Heart left ventricle (tissue), 16 donors: ENCODE measurements at regions of chr6 and their contacts with region 1.

Region 1: GRCh38 chr6:143187238-143187923 is 126.7 kb downstream of the AIG1 start:
- DNase-seq: peak in 4 of 5 donors; percentile 28 to 62 (median 40)
- ATAC-seq: peak in 3 of 4 donors; percentile 69 to 79 (median 78)
- H3K4me3 ChIP-seq: no peak overlapping the region
- H3K27ac ChIP-seq: peak overlapping the region in 9 of 12 donors; percentile 19 to 72 (median 44)
- H3K4me1 ChIP-seq: peaks cover 0 to 26% (median 14%) of the 10 kb centered on the region in 12 donors
- H3K27me3 ChIP-seq: no peaks in the 10 kb centered on the region
- CTCF ChIP-seq: no peak
- POLR2A ChIP-seq: no peak

Region 2: GRCh38 chr6:143223895-143224294 is 36.5 kb after region 1 on chr6:
- intact Hi-C with region 1: loop called in 1 of 10 experiments (anchors 5 kb)
- DNase-seq: peak in 4 of 5 donors; percentile 65 to 78 (median 71)
- ATAC-seq: peak; percentile 48 to 91 (median 74)
- H3K4me3 ChIP-seq: no peak overlapping the region
- H3K27ac ChIP-seq: peak overlapping the region; percentile 6 to 82 (median 71)
- H3K4me1 ChIP-seq: peaks cover 0 to 40% (median 23%) of the 10 kb centered on the region in 12 donors
- H3K27me3 ChIP-seq: no peaks in the 10 kb centered on the region
- CTCF ChIP-seq: no peak
- POLR2A ChIP-seq: no peak

Region 3: GRCh38 chr6:143279385-143279784 is 92.0 kb after region 1 on chr6:
- intact Hi-C with region 1: no loop called
- DNase-seq: peak in 1 of 5 donors; percentile 33
- ATAC-seq: peak in 3 of 4 donors; percentile 65 to 89 (median 68)
- H3K4me3 ChIP-seq: no peak overlapping the region
- H3K27ac ChIP-seq: no peak overlapping the region
- H3K4me1 ChIP-seq: peaks cover 0 to 4% (median 0%) of the 10 kb centered on the region in 12 donors
- H3K27me3 ChIP-seq: no peaks in the 10 kb centered on the region
- CTCF ChIP-seq: peak in 8 of 12 donors; percentile 17 to 54 (median 38)
- POLR2A ChIP-seq: no peak